ENCODE measurements at regions of chr10 and their contacts with region 1.

Region 1: DNA sequence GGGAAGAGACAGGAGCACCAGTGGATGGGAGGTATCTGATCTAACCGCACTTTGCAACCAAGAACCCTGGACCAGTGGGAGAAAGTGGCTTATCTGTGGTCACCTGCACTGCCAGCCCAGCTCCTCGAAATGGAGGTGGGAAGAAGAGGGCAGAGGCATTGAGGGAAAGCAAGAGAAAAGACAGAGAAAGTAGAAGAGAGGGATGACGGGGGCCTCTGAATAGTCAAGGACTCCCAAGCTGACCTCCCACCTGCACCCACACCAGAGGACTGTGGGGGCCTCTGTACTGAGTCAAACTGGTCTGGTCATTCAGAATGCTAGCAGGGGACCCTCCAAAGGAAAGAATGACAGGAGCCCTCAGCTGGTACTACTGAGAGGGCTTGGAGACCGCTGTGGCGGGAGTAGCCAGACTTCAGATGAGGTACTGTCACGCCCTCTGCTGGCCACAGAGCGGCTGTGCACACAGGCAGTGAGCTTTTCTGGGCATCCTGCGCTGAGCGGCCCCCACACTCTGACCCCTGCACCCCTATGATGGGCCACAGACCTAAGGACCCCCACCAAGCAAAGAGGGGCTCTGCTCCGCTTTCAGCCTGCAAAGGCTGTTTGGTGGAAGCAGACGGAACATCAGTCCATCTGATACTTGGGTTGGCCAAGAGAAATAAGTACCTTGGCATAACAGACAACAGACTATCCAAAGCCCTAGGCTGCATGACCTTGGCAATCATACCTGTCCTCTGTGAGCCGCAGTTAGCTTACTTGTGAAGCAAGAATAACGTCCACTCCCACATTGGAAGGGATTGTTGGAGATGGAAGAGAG is 112.9 kb downstream of the COL13A1 start:
- DNase-seq: peak; percentile 27 to 93
- H3K4me3 ChIP-seq: no peak overlapping the region
- H3K27ac ChIP-seq: no peak overlapping the region
- H3K4me1 ChIP-seq: peaks cover 0 to 5% (median 2%) of the 10 kb centered on the region in 4 experiments; a peak in 4 of 7 replicates
- H3K27me3 ChIP-seq: peaks cover 0 to 3% (median 0%) of the 10 kb centered on the region in 4 experiments; a peak in 2 of 7 replicates
- CTCF ChIP-seq: peak; percentile 96 to 99 (median 96)
- EP300 ChIP-seq: no peak
- POLR2A ChIP-seq: no peak
- RAD21 ChIP-seq: peak; percentile 96 to 97

Region 2: GRCh38 chr10:69757553-69758309 is 156.9 kb before region 1 on chr10:
- CTCF ChIA-PET with region 1: interaction called, 12 read pairs
- POLR2A ChIA-PET with region 1: no interaction called
- DNase-seq: no peak
- H3K4me3 ChIP-seq: no peak overlapping the region
- H3K27ac ChIP-seq: no peak overlapping the region
- H3K4me1 ChIP-seq: no peaks in the 10 kb centered on the region
- H3K27me3 ChIP-seq: peaks cover 0 to 4% (median 0%) of the 10 kb centered on the region in 4 experiments; a peak in 2 of 7 replicates
- CTCF ChIP-seq: no peak
- EP300 ChIP-seq: no peak
- POLR2A ChIP-seq: no peak
- RAD21 ChIP-seq: no peak

Region 3: DNA sequence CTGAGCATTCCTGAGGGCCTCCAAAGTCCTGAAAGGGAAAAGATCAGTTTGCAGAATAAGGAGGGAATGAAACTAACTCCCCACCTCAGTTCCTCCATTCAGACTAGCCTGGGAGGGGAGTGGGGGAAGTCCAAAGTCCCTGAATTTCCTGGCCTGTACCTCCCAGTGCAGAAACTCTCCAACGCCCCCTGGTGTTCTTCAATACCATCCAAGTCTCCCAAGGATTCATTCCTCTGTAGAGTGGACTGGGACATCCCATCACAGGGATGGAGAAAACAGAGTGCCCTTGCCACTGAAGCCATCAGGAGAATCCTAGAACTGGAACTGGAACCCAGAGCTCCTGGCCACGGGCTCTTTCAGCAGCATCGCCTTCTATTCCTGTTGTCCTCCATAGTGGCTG is 114.5 kb before region 1 on chr10:
- CTCF ChIA-PET with region 1: interaction called, 198 read pairs
- POLR2A ChIA-PET with region 1: no interaction called
- DNase-seq: peak in 1 of 2 experiments; percentile 74
- H3K4me3 ChIP-seq: no peak overlapping the region
- H3K27ac ChIP-seq: no peak overlapping the region
- H3K4me1 ChIP-seq: peaks cover 0 to 8% (median 4%) of the 10 kb centered on the region in 4 experiments; a peak in 4 of 7 replicates
- H3K27me3 ChIP-seq: peaks cover 10 to 34% (median 24%) of the 10 kb centered on the region in 4 experiments; a peak in 6 of 7 replicates
- CTCF ChIP-seq: peak; percentile 48 to 90 (median 76)
- EP300 ChIP-seq: no peak
- POLR2A ChIP-seq: no peak
- RAD21 ChIP-seq: peak; percentile 61 to 74

Region 4: GRCh38 chr10:69861251-69862240 is 53.1 kb before region 1 on chr10:
- CTCF ChIA-PET with region 1: interaction called, 170 read pairs
- POLR2A ChIA-PET with region 1: interaction called, 4 read pairs
- DNase-seq: no peak
- H3K4me3 ChIP-seq: no peak overlapping the region
- H3K27ac ChIP-seq: no peak overlapping the region; the same call in 1 of the 2 replicates
- H3K4me1 ChIP-seq: peaks cover 0 to 35% (median 19%) of the 10 kb centered on the region in 4 experiments; a peak in 6 of 7 replicates
- H3K27me3 ChIP-seq: no peaks in the 10 kb centered on the region; a peak in 1 of 7 replicates
- CTCF ChIP-seq: peak in 2 of 3 experiments; percentile 51 to 58; a peak in 2 of 4 replicates
- EP300 ChIP-seq: no peak
- POLR2A ChIP-seq: no peak
- RAD21 ChIP-seq: peak; percentile 30 to 58; a peak in 3 of 4 replicates

Region 5: GRCh38 chr10:69901628-69902505 is 12.7 kb before region 1 on chr10:
- CTCF ChIA-PET with region 1: interaction called, 209 read pairs
- POLR2A ChIA-PET with region 1: interaction called, 4 read pairs
- DNase-seq: peak; percentile 31 to 71
- H3K4me3 ChIP-seq: no peak overlapping the region
- H3K27ac ChIP-seq: no peak overlapping the region
- H3K4me1 ChIP-seq: peaks cover 0 to 15% (median 7%) of the 10 kb centered on the region in 4 experiments; a peak in 3 of 7 replicates
- H3K27me3 ChIP-seq: no peaks in the 10 kb centered on the region
- CTCF ChIP-seq: peak; percentile 72 to 96 (median 89)
- EP300 ChIP-seq: no peak
- POLR2A ChIP-seq: no peak
- RAD21 ChIP-seq: peak; percentile 52 to 73

Region 6: DNA sequence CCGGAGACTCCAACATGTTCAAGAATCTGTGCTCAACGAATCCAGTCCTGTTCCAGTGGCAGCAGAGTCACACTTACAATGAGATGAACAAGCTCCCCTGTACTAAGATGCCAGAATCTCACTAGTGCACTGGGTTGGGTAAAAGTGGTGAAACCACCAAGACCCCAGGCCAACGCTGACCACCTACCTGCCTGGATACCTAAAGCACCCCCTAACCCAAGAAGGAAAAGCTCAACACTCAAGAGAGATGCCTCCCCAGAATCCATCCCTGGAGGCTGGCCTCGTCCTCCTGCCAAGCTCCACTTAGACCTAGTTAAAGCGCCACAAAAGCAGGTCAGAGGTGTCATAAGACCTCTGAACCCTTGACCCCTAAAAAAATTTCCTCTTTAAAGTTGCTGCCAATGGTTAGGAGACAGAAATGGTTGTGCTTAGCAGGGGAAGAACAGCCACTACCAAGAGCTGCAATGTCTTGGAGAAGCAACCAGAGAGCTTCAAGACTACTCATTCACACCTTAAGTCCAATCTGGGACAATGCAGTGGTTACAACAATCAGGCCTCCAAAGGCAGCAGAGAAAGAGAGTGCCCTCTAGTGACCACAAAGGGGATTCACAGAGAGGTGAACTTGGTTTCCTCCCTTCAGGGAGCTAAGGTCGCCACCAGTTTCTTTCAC is 43.4 kb after region 1 on chr10:
- CTCF ChIA-PET with region 1: interaction called, 76 read pairs
- POLR2A ChIA-PET with region 1: no interaction called
- DNase-seq: no peak
- H3K4me3 ChIP-seq: no peak overlapping the region
- H3K27ac ChIP-seq: no peak overlapping the region
- H3K4me1 ChIP-seq: peaks cover 2 to 9% (median 3%) of the 10 kb centered on the region in 4 experiments; a peak in 6 of 7 replicates
- H3K27me3 ChIP-seq: peaks cover 0 to 13% (median 5%) of the 10 kb centered on the region in 4 experiments; a peak in 3 of 7 replicates
- CTCF ChIP-seq: peak; percentile 43 to 93 (median 87)
- EP300 ChIP-seq: no peak
- POLR2A ChIP-seq: no peak
- RAD21 ChIP-seq: peak; percentile 83 to 88

Region 7: DNA sequence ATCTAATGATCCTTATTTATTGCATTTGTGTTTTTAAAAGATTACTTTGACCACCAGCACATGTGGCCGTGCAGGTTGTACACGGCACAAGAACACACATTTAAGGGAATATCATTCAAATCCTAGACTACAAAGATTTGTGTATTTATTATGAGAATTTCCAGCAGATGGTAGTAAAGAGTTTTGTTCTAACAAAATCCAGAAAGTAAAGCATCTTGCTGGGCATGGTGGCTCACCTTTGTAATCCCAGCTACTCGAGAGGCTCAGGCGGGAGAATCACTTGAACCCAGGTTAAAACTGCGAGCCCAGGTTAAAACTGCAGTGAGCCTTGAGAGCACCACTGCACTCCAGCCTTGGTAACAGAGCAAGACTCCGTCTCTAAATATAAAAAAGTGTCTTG is 169.6 kb after region 1 on chr10:
- CTCF ChIA-PET with region 1: no interaction called
- POLR2A ChIA-PET with region 1: no interaction called
- DNase-seq: no peak
- H3K4me3 ChIP-seq: no peak overlapping the region
- H3K27ac ChIP-seq: no peak overlapping the region
- H3K4me1 ChIP-seq: no peaks in the 10 kb centered on the region; a peak in 2 of 7 replicates
- H3K27me3 ChIP-seq: no peaks in the 10 kb centered on the region
- CTCF ChIP-seq: no peak
- EP300 ChIP-seq: no peak
- POLR2A ChIP-seq: no peak
- RAD21 ChIP-seq: no peak

Measured in H1 (cell line).